ENCODE measurements at regions of chr2 and their contacts with region 1.

Region 1: GRCh38 chr2:174697255-174697654 is 67.0 kb downstream of the CHRNA1 start:
- DNase-seq: peak; percentile 78
- H3K4me3 Mint-ChIP-seq: no peak overlapping the region
- H3K27ac Mint-ChIP-seq: no peak overlapping the region
- H3K4me1 Mint-ChIP-seq: no peaks in the 10 kb centered on the region
- H3K27me3 Mint-ChIP-seq: no peaks in the 10 kb centered on the region

Region 2: GRCh38 chr2:174577967-174578589 is 119.2 kb before region 1 on chr2:
- CTCF ChIA-PET with region 1: interaction called, 65 read pairs
- POLR2A ChIA-PET with region 1: no interaction called
- intact Hi-C with region 1: no loop called
- DNase-seq: peak; percentile 70
- H3K4me3 Mint-ChIP-seq: no peak overlapping the region
- H3K27ac Mint-ChIP-seq: peak overlapping the region; percentile 54
- H3K4me1 Mint-ChIP-seq: peaks cover 78% of the 10 kb centered on the region
- H3K27me3 Mint-ChIP-seq: no peaks in the 10 kb centered on the region

Region 3: DNA sequence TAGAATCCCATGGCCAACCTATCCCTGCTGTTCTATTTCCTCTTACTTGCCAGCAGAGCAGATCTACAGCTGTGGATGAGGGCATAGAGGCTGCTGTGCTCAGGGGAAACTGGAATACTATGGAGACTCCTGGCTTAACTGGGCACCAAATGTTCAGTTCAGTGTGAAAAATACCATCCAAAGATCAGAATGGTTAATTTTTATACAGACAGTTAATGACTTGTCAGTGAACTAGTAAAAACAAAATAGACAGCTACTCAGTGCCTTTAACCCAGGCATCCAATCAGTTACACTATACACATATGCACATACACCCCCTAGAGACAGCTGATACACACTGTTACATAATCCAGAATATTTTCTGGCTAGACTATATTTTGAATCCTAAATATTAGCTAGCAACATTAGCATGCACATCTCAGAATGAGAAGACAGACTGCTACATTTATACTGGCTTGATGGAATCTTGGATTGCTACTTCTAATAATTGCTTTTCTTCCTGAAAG is 40.5 kb before region 1 on chr2:
- CTCF ChIA-PET with region 1: no interaction called
- POLR2A ChIA-PET with region 1: no interaction called
- intact Hi-C with region 1: no loop called
- DNase-seq: no peak
- H3K4me3 Mint-ChIP-seq: no peak overlapping the region
- H3K27ac Mint-ChIP-seq: no peak overlapping the region
- H3K4me1 Mint-ChIP-seq: peaks cover 27% of the 10 kb centered on the region
- H3K27me3 Mint-ChIP-seq: no peaks in the 10 kb centered on the region

Region 4: GRCh38 chr2:174717273-174717672 is 20.0 kb after region 1 on chr2:
- CTCF ChIA-PET with region 1: interaction called, 22 read pairs
- POLR2A ChIA-PET with region 1: no interaction called
- intact Hi-C with region 1: no loop called
- DNase-seq: peak; percentile 23
- H3K4me3 Mint-ChIP-seq: peak overlapping the region; percentile 28
- H3K27ac Mint-ChIP-seq: peak overlapping the region; percentile 43
- H3K4me1 Mint-ChIP-seq: peaks cover 25% of the 10 kb centered on the region
- H3K27me3 Mint-ChIP-seq: no peaks in the 10 kb centered on the region

Region 5: DNA sequence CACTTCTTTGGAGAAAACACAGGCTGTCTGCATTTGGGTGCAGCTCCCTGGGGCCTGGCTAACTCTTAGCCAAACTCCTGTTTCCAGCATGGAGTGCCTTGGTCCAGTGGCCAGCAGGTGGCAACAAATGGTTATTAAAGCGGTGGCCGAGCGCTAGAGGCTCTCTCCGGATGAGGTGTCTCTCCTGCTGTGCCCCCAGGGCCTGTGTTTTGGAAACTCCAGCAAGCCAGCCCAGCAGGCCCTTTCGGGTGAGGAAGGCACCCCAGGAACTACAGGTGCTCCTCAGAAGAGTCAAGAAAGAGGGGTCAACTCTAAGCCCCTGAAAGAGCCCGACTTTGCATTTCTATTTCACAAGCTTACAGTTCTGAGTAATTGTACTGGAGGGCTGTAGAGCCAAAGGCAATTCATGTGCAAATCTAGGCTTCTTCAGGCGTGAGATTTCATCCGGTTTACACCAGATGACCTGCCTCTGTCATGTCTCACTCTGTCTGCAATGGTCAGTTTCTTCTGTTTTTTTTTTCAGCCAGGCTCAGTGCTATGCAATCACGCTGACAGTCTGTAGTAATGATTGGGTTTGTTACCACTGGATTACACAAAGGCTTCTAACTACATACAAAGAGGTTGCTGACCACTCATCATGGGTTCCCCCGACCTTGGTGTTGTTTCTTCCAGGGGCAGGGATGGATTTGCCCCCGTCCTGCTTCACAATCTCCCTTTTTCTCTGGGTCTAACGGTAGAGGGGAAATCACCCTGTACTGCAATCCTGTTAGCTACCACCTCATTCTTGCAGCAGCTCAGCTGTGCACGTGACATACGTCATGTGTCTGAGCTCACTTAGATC is 74.6 kb after region 1 on chr2:
- CTCF ChIA-PET with region 1: interaction called, 33 read pairs
- POLR2A ChIA-PET with region 1: no interaction called
- intact Hi-C with region 1: loop called (anchors 5 kb)
- DNase-seq: peak; percentile 72
- H3K4me3 Mint-ChIP-seq: no peak overlapping the region
- H3K27ac Mint-ChIP-seq: no peak overlapping the region
- H3K4me1 Mint-ChIP-seq: peaks cover 9% of the 10 kb centered on the region
- H3K27me3 Mint-ChIP-seq: no peaks in the 10 kb centered on the region

Region 6: GRCh38 chr2:174797781-174798276 is 100.6 kb after region 1 on chr2:
- CTCF ChIA-PET with region 1: no interaction called
- POLR2A ChIA-PET with region 1: no interaction called
- intact Hi-C with region 1: no loop called
- DNase-seq: no peak
- H3K4me3 Mint-ChIP-seq: no peak overlapping the region
- H3K27ac Mint-ChIP-seq: no peak overlapping the region
- H3K4me1 Mint-ChIP-seq: peaks cover 24% of the 10 kb centered on the region
- H3K27me3 Mint-ChIP-seq: no peaks in the 10 kb centered on the region

Region 7: GRCh38 chr2:175004980-175005732 is 307.9 kb after region 1 on chr2 and contains the start of gene CHN1:
- CTCF ChIA-PET with region 1: interaction called, 15 read pairs
- POLR2A ChIA-PET with region 1: interaction called, 4 read pairs
- intact Hi-C with region 1: loop called (anchors 5 kb)
- DNase-seq: peak; percentile 73
- H3K4me3 Mint-ChIP-seq: peak within 1 kb of the TSS; percentile 74
- H3K27ac Mint-ChIP-seq: no peak within 1 kb of the TSS
- H3K4me1 Mint-ChIP-seq: peaks cover 4% of the 10 kb centered on the region
- H3K27me3 Mint-ChIP-seq: peaks cover 48% of the 10 kb centered on the region
- total RNA-seq, gene CHN1: 3.8 to 6.2 TPM

Region 8: GRCh38 chr2:175282290-175282689 is 585.0 kb after region 1 on chr2:
- CTCF ChIA-PET with region 1: interaction called, 19 read pairs
- POLR2A ChIA-PET with region 1: no interaction called
- intact Hi-C with region 1: no loop called
- DNase-seq: no peak
- H3K4me3 Mint-ChIP-seq: no peak overlapping the region
- H3K27ac Mint-ChIP-seq: no peak overlapping the region
- H3K4me1 Mint-ChIP-seq: peaks cover 3% of the 10 kb centered on the region
- H3K27me3 Mint-ChIP-seq: peaks cover 3% of the 10 kb centered on the region

Measured in activated CD4-positive, alpha-beta memory T cell treated with anti-CD3 and anti-CD28 coated beads for 36 hours (primary cell).